Sigmoid colon (tissue), 7 donors: ENCODE measurements at regions of chr22 and their contacts with region 1.

Region 1: DNA sequence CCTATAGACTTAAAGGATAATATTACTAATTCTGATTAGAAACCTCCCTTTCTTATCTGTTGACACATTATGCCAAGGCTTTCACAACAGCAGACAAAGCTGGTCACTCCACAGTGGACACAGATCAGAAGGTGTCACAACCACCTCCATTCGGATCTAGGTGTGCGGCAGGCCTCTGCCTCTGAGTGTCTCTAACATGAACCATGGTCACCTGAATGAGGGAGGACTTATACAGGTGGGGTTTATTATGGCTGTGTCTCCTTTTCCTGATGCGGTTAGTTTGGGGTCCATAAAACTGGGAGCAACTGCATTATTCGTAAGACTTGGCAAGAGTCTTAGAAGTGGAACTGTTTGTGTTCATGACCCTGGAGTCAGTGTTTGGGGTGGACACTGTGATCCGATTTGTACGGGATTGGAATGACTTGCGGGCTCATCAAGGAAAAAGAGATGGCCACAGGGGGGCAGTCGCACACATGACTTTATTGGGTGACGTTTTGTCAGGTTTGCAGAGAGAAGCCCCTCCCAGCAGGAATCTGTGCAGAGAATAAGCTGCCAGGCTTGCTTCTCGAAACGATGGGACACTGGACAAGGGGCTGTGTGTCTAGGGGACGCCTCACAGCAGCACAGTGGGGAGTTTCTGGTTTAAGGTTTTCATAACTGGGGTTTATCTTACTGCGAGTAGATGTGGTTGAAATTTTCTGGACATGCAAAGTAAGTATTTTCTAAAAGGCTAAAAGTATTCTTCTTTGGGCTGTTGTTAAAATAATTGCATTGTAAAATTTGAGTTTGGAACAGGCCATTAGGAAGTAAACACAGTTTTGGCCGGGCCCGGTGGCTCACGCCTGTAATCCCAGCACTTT is 90.6 kb downstream of the GAB4 start:
- DNase-seq: no peak
- H3K4me3 ChIP-seq: no peak overlapping the region
- H3K27ac ChIP-seq: no peak overlapping the region
- H3K4me1 ChIP-seq: no peaks in the 10 kb centered on the region
- H3K27me3 ChIP-seq: peaks cover 0 to 15% (median 2%) of the 10 kb centered on the region in 3 donors
- CTCF ChIP-seq: peak in 3 of 4 experiments; percentile 8 to 47 (median 35)
- EP300 ChIP-seq: no peak
- POLR2A ChIP-seq: no peak

Region 2: GRCh38 chr22:16844529-16844928 is 72.8 kb before region 1 on chr22:
- intact Hi-C with region 1: no loop called
- DNase-seq: no peak
- H3K4me3 ChIP-seq: no peak overlapping the region
- H3K27ac ChIP-seq: no peak overlapping the region
- H3K4me1 ChIP-seq: no peaks in the 10 kb centered on the region
- H3K27me3 ChIP-seq: no peaks in the 10 kb centered on the region
- CTCF ChIP-seq: no peak
- EP300 ChIP-seq: no peak
- POLR2A ChIP-seq: no peak

Region 3: DNA sequence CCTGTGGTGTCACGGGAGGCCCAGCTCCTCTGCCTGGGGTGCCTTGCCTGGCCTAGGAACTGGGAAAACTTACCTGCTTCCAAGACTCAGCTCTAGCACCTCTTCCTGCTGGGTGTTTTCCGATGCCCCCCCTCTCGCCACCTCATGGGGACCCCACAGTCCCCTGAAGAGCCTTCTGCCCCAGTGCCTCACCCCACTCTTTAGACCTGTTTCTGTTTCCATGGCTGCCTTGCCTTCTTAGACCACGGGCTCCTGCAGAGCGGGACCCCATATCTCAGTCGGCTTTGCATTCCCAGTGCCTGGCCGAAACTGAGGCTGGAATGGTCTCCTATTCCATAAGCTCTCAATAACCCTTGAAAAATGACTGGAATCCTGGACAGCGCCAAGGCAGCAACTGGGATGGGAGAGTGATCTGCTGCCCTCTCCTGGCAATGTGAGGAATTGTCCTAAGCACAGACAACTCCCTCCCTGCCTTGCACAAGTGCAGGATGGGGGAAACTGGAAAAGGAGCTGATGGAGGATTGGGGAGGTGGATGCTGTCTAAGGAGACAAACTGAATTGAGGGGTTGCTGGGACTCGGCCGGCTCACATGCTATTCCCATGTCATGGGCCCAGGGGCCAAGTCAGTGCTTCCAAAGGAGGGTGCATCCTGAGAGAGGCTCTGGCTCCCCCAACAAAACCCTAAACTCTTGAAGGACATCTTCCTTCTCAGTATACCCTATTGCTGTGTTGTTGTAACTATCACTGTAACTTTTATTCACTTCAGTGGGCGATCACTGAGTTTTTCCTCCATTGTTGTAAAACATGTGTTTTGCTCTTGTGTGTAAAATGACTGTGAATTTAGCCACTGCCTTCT is 140.8 kb after region 1 on chr22:
- intact Hi-C with region 1: loop called (anchors 2 kb)
- DNase-seq: peak; percentile 74
- H3K4me3 ChIP-seq: no peak overlapping the region
- H3K27ac ChIP-seq: no peak overlapping the region
- H3K4me1 ChIP-seq: peaks cover 0 to 4% (median 0%) of the 10 kb centered on the region in 4 donors
- H3K27me3 ChIP-seq: peaks cover 0 to 5% (median 0%) of the 10 kb centered on the region in 3 donors
- CTCF ChIP-seq: peak in 3 of 4 experiments; percentile 65 to 87 (median 79)
- EP300 ChIP-seq: no peak
- POLR2A ChIP-seq: no peak